ENCODE measurements at regions of chr7 and their contacts with region 1.

Region 1: DNA sequence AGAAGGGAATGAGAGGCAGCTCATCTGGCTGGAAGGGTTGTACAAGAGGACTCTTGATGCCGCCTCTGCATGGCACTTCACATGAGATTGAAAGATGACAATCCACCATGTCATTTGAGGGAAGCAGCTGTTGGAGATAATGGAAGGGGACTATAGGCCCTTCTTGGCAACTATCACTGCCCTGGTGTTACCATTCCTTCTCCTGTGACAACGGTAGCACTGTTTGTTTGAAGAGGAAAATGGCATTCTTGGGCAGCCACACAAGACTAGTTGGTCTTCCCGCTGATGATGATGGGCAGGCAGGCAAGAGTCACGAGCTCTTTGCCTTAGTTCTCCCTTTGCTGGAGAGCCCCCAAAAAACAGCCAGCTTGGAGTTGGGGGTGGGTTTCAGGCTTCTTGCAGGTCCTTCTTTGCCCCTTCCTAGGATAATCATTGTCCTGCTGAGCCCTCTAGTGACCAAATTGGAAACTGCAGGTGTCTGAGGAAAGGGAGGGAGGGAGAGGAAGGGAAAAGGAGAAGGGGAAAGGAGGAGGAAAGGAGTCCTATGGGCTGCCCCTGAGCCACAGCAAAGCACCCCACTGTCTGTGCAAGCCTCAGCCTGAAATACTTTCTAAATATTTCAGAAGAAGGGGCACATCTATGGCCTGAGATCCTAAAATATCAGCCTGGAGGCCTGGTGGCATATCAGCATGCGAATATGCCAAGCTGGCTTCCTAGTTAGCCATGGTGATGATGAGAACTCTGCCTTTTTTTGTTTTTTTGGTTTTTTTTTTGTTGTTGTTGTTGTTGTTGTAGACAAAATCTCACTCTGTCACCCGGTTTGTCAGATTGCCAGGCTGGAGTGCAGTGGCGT is 165.6 kb upstream of the KMT2E start:
- DNase-seq: no peak
- ATAC-seq: peak; percentile 55 to 67
- H3K4me3 ChIP-seq: no peak overlapping the region
- H3K27ac ChIP-seq: no peak overlapping the region
- H3K4me1 ChIP-seq: no peaks in the 10 kb centered on the region
- H3K27me3 ChIP-seq: no peaks in the 10 kb centered on the region

Region 2: DNA sequence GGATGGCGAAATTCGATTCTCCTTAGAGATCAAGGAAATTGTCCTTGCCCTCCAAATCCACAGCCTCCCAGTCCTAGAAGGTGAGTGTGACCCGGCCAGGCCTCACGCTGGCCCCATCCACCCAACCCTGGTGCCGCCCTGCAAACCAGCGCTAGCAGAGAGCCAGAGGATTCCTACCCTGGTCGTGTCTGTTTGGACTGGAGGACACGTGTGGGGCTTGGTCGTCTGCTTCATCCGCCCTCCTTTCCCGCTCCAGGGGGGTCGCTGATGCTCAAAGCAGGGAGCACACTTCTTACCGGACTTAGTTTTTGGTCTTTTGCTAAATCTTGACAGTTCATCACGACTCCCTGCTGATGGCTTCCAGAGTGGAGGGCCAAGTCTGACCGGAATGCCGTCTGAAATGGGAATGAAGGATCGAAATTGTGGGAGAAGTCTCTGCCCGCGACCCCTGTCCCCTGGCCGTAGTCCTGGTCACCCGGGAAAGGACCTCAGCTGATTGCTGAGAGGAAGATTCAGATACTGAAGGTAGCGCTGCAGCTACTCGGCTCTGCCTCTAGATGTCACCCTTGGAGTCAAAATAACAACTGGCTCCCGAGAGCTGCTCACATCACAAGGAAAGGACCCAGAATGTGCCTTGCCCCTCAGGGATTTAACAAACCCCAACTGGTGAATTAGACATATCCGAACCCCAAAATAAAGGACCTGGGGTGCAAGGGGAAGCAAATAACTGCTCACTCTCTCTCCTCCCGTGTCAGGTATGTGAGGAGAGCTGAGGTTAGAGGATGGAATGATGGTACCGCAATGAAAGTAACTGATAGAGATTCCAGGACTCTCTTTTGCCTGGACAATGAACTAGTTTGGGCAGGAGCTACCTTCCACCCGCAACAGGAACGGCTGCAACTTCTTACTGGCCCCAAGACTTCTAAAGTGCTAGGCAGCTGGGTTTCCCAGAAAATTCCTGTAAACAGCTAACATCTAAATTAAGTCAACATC is 617.0 kb before region 1 on chr7:
- intact Hi-C with region 1: loop called in 2 of 4 experiments (anchors 5 kb)
- DNase-seq: peak in 2 of 3 donors; percentile 28 to 39
- ATAC-seq: peak; percentile 67 to 74
- H3K4me3 ChIP-seq: no peak overlapping the region
- H3K27ac ChIP-seq: no peak overlapping the region
- H3K4me1 ChIP-seq: no peaks in the 10 kb centered on the region
- H3K27me3 ChIP-seq: no peaks in the 10 kb centered on the region

Region 3: GRCh38 chr7:104267701-104268368 is 580.5 kb before region 1 on chr7:
- intact Hi-C with region 1: loop called in 2 of 4 experiments (anchors 10 kb)
- DNase-seq: no peak
- ATAC-seq: no peak
- H3K4me3 ChIP-seq: no peak overlapping the region
- H3K27ac ChIP-seq: no peak overlapping the region
- H3K4me1 ChIP-seq: no peaks in the 10 kb centered on the region
- H3K27me3 ChIP-seq: no peaks in the 10 kb centered on the region

Region 4: GRCh38 chr7:104272767-104273384 is 575.5 kb before region 1 on chr7:
- intact Hi-C with region 1: loop called in 2 of 4 experiments (anchors 10 kb)
- DNase-seq: no peak
- ATAC-seq: no peak
- H3K4me3 ChIP-seq: no peak overlapping the region
- H3K27ac ChIP-seq: no peak overlapping the region
- H3K4me1 ChIP-seq: no peaks in the 10 kb centered on the region
- H3K27me3 ChIP-seq: no peaks in the 10 kb centered on the region

Region 5: GRCh38 chr7:104960741-104961448 is 112.5 kb after region 1 on chr7:
- intact Hi-C with region 1: no loop called
- DNase-seq: peak; percentile 70 to 78 (median 73)
- ATAC-seq: peak; percentile 86 to 88
- H3K4me3 ChIP-seq: no peak overlapping the region
- H3K27ac ChIP-seq: peak overlapping the region; percentile 75
- H3K4me1 ChIP-seq: peaks cover 16% of the 10 kb centered on the region
- H3K27me3 ChIP-seq: no peaks in the 10 kb centered on the region

Measured in right cardiac atrium (tissue), 5 donors.